Right ventricle myocardium superior (tissue), 1 donor: ENCODE measurements at regions of chr4 and their contacts with region 1.

Region 1: DNA sequence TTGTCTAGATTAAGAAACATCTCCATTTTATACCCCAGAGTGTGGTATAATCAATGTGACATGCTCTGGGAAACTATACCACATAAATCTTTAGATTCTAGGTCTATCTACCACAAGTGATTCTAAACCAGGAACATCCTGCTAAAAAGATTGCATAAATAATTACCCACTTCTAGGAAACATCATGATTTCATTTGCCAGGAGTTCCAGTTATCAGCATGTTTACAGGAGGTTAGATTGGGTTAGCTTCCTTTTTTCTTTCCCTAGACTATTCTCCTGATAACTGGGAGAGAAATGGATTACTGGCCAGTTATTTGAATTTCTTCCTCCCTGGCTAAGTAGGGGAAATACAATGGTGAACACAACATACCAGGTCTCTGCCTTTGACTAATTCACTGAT is 230.3 kb upstream of the BOD1L1 start:
- DNase-seq: no peak
- ATAC-seq: no peak

Region 2: DNA sequence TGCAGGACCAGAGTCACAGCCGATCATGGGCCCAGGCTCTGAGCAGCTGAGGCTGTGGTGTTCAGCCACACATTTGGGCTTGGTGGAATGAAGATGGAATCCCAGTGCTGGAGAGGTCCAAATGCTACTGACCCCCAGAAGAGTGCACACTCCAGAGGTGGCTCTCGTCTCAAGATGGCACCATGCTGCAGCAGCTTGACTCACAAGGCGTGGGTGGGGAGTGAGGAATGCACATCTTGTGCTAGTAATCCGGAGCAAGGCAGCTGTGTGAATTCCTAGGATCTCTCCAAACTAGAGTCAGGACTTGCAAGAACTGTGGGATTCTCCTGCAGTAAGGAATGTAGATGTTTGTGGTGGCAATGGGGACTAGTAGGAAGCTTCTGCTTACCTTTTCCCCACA is 402.4 kb before region 1 on chr4:
- intact Hi-C with region 1: no loop called
- DNase-seq: no peak
- ATAC-seq: no peak

Region 3: GRCh38 chr4:13656569-13657405 is 201.0 kb before region 1 on chr4:
- intact Hi-C with region 1: loop called (anchors 5 kb)
- DNase-seq: peak; percentile 68
- ATAC-seq: peak; percentile 62

Region 4: GRCh38 chr4:14054391-14054790 is 196.6 kb after region 1 on chr4:
- intact Hi-C with region 1: no loop called
- DNase-seq: no peak
- ATAC-seq: no peak